ENCODE measurements at regions of chr7 and their contacts with region 1.

Region 1: DNA sequence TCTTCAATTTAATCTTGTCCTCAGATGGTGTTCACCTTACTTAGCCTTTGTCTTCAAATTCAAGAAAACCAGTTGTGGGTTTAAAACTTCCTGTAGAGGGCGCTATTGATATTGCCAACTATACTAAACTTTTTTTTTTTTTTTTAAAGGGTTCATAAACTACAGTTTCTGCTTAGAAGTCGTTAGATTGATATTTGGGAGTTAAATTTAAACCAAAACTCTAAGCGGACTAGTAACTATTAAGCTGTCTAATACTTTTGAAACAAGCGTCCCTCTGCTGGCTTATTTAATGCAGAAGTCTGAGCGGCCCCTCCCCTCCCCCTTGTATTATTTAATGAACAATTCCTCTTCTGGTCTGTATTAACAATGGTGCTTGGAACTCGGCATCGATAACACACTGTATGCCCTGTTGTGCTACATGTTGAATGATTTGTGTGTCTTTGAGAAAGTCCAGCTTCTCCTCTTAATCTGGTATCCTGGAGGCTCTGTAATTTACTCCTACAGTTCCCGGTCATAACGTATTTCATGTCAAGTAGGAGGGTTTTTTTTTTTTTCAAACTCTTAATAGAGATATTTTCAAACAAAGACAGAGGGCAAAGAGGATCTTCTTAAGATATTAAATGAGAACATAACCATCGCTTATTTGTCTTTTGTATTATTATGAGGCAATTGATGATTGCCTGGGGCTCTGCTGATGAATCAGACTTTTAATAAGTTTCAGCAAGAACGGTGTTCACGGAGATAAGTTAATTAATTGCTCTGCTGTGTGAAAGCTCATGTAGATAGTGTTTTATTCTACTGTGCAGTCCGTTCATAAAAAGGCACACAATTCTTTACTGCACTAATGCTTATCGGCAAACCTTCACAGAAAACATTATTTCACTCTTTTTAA is 22.6 kb upstream of the CREB5 start:
- DNase-seq: no peak
- ATAC-seq: no peak
- H3K4me3 Mint-ChIP-seq: no peak overlapping the region
- H3K27ac Mint-ChIP-seq: no peak overlapping the region
- H3K4me1 Mint-ChIP-seq: no peaks in the 10 kb centered on the region
- H3K27me3 Mint-ChIP-seq: peaks cover 35% of the 10 kb centered on the region

Region 2: DNA sequence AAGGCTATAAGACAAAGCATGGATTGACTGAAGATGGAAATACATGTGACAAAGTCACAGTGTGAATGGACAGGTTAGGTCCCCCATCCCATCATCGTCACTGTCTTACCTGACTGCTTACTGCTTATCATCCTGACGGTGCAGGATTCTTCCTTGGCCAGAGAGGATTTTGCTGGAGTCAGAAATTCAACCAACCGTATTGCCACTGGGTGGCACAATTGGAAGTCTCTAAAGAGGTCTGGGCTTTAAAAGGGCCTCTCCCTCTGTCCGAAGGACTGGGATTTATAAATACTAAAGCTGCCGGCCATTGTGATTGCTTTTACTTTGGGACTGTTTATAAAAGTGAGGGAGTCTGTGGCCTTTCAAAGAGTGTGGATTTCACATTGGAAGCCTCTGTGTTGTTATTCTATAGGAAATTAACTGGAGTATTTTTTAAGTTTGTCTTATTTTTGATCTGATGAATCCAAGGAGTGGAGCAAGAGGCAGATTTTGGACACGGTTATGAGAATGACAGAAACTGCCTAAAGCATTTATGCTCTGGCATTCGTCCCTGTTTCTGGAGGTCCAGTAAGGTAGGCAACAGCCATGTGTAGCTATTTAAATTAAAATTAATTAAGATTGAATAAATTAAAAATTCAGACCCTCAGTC is 90.8 kb before region 1 on chr7:
- CTCF ChIA-PET with region 1: no interaction called
- POLR2A ChIA-PET with region 1: no interaction called
- intact Hi-C with region 1: loop called in 1 of 2 experiments (anchors 5 kb)
- DNase-seq: peak; percentile 19
- ATAC-seq: no peak
- H3K4me3 Mint-ChIP-seq: no peak overlapping the region
- H3K27ac Mint-ChIP-seq: no peak overlapping the region
- H3K4me1 Mint-ChIP-seq: peaks cover 2% of the 10 kb centered on the region
- H3K27me3 Mint-ChIP-seq: peaks cover 14% of the 10 kb centered on the region

Region 3: GRCh38 chr7:28626624-28627262 is 237.0 kb after region 1 on chr7:
- CTCF ChIA-PET with region 1: interaction called, 4 read pairs
- POLR2A ChIA-PET with region 1: no interaction called
- intact Hi-C with region 1: loop called (anchors 1 kb)
- DNase-seq: peak; percentile 41
- ATAC-seq: no peak
- H3K4me3 Mint-ChIP-seq: no peak overlapping the region
- H3K27ac Mint-ChIP-seq: no peak overlapping the region
- H3K4me1 Mint-ChIP-seq: no peaks in the 10 kb centered on the region
- H3K27me3 Mint-ChIP-seq: peaks cover 10% of the 10 kb centered on the region

Region 4: GRCh38 chr7:28853834-28854749 is 464.3 kb after region 1 on chr7:
- CTCF ChIA-PET with region 1: interaction called, 3 read pairs
- POLR2A ChIA-PET with region 1: no interaction called
- intact Hi-C with region 1: loop called (anchors 1 kb)
- DNase-seq: peak; percentile 85
- ATAC-seq: peak; percentile 99
- H3K4me3 Mint-ChIP-seq: peak overlapping the region; percentile 59
- H3K27ac Mint-ChIP-seq: no peak overlapping the region
- H3K4me1 Mint-ChIP-seq: peaks cover 5% of the 10 kb centered on the region
- H3K27me3 Mint-ChIP-seq: peaks cover 50% of the 10 kb centered on the region